Right ventricle myocardium superior (tissue), 1 donor: ENCODE measurements at regions of chr1 and their contacts with region 1.

Region 1: GRCh38 chr1:36285448-36286101 is 20.6 kb upstream of the SH3D21 start:
- DNase-seq: no peak
- ATAC-seq: peak; percentile 82

Region 2: GRCh38 chr1:36115200-36115669 is 170.3 kb before region 1 on chr1:
- intact Hi-C with region 1: no loop called
- DNase-seq: peak; percentile 58
- ATAC-seq: peak; percentile 44

Region 3: DNA sequence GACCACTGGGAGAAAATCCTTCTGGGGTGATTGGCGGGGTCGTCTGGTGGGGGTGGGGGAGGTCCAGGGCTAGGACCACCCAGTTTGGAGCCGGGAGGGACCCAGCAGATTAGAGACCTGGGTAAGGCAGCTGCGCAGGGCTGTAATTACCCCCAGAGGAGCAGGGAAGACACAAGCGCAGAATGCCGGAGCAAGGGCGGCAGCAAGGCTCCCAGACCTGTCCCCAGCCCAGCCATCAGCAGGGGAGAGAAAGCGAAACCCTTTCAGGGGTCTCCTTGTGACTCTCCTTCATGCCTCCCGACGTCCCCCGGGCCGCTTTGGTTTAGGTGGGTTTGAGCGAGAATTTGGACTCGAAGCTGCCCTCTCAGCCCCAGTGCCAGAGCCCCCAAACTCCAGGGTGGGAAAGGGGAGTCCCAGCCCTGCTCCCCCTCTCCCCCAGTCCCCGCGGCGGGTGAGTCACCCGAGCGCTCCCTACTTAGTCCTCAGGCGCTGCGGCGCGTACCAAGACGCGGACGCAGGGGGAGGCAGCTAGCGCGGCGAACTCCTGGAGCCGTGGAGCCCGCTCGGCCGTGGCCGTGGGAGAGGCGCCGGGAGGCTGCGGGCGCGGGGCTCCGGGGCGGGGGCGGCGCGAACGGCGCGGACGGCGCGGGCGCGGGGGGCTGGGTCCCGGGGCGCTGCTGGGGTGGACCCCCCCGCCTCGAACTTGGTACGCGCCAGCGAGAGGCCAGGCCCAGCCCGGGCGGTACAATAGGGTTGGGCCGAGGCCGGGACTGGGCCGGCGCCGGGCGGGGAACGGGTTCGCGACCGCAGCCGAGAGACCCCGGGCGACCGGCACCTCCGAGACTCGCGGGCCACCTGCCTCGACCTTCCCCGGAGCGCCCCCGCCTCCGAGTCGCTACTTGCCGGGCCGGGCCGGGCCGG is 129.9 kb before region 1 on chr1 and contains the start of gene MAP7D1:
- intact Hi-C with region 1: loop called (anchors 5 kb)
- DNase-seq: peak; percentile 94
- ATAC-seq: peak; percentile 68
- total RNA-seq, gene MAP7D1: 390 TPM

Region 4: GRCh38 chr1:36223993-36224536 is 61.5 kb before region 1 on chr1 and contains the start of gene THRAP3:
- intact Hi-C with region 1: loop called (anchors 5 kb)
- DNase-seq: peak; percentile 100
- ATAC-seq: peak; percentile 96
- total RNA-seq, gene THRAP3: 57.6 TPM

Region 5: GRCh38 chr1:36650200-36651065 is 364.9 kb after region 1 on chr1:
- intact Hi-C with region 1: no loop called
- DNase-seq: peak; percentile 64
- ATAC-seq: peak; percentile 48